ENCODE measurements at regions of chr10 and their contacts with region 1.

Region 1: GRCh38 chr10:24503461-24504320 is 220.0 kb downstream of the ARHGAP21 start:
- DNase-seq: no peak
- ATAC-seq: peak; percentile 60

Region 2: DNA sequence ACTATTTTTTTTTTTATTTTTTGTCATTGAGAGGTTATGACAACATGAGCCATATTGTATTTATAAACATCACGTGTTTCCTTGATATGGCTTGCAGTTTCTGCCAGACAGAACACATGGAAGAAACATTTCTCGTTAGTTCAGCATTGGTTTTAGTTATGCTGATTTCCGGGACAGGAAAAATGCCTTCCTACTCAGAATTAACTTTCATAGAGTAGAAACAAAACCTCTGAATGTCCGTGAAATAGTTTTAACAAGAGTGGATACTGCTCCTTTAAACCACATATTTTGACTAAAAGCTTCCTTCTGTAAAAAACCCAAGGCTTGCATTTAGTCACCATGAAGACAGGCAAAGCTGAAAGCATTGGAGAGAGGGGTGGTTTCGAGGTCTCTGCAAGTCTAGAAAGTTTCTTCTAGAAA is 54.4 kb before region 1 on chr10:
- intact Hi-C with region 1: loop called (anchors 10 kb)
- DNase-seq: no peak
- ATAC-seq: peak; percentile 76